Activated T-helper 2 cell treated with anti-CD3 and anti-CD28 coated beads, Interferon-gamma antibody, Interleukin-2, Interleukin-4, amounts not matched to agents 10 μg/mL and 5 μg/mL and 100 μg/mL, durations not matched to agents 14 hours and 24 hours and 36 hours (primary cell): ENCODE measurements at regions of chr1 and their contacts with region 1.

Region 1: DNA sequence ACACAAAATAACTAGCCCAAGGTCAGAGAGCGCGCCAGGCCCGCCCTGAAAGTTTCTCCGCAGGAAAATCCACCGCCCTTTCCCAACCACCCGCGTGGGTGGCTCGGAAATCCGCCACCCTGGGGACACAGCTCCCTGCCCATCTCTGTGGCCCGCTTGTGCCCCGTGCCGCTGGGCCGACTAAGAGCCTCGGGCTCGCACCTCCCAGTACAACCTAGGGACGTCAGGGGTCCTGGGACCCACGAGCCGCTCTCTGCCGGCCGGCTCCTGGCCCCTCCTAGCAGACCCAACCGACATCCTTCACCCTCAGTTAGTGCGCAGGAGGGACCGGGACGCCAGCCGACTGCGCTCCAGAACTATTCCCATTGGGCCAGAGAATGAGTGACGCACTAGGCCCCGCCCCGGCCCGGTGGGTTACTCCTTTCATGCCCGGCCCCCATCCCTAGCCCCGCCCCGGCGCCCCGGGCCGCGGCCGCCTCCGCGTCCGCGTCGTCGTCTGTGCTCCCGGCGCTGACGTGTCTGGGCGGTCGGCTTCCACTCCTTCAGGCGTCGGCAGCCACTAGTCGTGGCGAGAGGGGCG is 395 bp upstream of the UAP1 start:
- DNase-seq: peak; percentile 97
- H3K4me3 Mint-ChIP-seq: peak overlapping the region; percentile 86
- H3K27ac Mint-ChIP-seq: peak overlapping the region; percentile 94
- H3K4me1 Mint-ChIP-seq: peaks cover 38% of the 10 kb centered on the region
- H3K27me3 Mint-ChIP-seq: peaks cover 2% of the 10 kb centered on the region

Region 2: GRCh38 chr1:161766102-161766981 is 794.8 kb before region 1 on chr1 and contains the start of gene ATF6:
- intact Hi-C with region 1: loop called (anchors 1 kb)
- DNase-seq: peak; percentile 77
- H3K4me3 Mint-ChIP-seq: peak within 1 kb of the TSS; percentile 97
- H3K27ac Mint-ChIP-seq: peak within 1 kb of the TSS; percentile 96
- H3K4me1 Mint-ChIP-seq: peaks cover 40% of the 10 kb centered on the region
- H3K27me3 Mint-ChIP-seq: no peaks in the 10 kb centered on the region
- total RNA-seq, gene ATF6: 29.6 and 30.4 TPM in 2 replicates

Region 3: DNA sequence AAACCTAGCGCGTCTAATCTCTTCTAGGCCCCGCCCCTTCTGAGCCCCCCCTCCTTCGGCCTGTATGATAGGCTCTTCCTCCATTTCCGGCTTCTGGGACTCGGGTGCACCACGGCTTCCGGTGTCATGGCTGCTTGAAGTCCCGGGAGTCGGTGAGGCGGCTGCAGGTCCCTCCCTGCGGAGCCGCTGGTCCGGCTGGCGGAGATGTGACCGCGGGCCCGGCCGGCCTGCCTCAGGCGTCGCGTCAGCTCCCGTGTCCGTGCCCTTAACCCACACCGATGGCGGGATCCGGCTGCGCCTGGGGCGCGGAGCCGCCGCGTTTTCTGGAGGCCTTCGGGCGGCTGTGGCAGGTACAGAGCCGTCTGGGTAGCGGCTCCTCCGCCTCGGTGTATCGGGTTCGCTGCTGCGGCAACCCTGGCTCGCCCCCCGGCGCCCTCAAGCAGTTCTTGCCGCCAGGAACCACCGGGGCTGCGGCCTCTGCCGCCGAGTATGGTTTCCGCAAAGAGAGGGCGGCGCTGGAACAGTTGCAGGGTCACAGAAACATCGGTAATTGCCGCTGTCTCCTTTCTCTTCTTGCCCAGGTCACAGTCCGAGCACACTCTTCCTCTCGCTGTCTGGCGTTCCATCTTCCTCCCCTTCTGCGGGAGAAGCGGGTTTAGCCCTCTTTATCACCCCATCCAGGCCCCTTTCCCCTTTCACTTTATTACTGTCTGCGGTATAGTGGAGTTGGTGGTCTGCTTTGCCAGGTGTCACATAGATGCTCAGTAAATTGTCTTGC is 63.2 kb before region 1 on chr1 and contains the start of gene UHMK1:
- intact Hi-C with region 1: loop called (anchors 1 kb)
- DNase-seq: peak; percentile 85
- H3K4me3 Mint-ChIP-seq: peak within 1 kb of the TSS; percentile 93
- H3K27ac Mint-ChIP-seq: peak within 1 kb of the TSS; percentile 90
- H3K4me1 Mint-ChIP-seq: peaks cover 31% of the 10 kb centered on the region
- H3K27me3 Mint-ChIP-seq: peaks cover 3% of the 10 kb centered on the region
- total RNA-seq, gene UHMK1: 56.3 and 56.7 TPM in 2 replicates

Region 4: GRCh38 chr1:162627662-162628296 is 66.7 kb after region 1 on chr1:
- intact Hi-C with region 1: no loop called
- DNase-seq: no peak
- H3K4me3 Mint-ChIP-seq: no peak overlapping the region
- H3K27ac Mint-ChIP-seq: no peak overlapping the region
- H3K4me1 Mint-ChIP-seq: peaks cover 4% of the 10 kb centered on the region
- H3K27me3 Mint-ChIP-seq: peaks cover 15% of the 10 kb centered on the region

Region 5: DNA sequence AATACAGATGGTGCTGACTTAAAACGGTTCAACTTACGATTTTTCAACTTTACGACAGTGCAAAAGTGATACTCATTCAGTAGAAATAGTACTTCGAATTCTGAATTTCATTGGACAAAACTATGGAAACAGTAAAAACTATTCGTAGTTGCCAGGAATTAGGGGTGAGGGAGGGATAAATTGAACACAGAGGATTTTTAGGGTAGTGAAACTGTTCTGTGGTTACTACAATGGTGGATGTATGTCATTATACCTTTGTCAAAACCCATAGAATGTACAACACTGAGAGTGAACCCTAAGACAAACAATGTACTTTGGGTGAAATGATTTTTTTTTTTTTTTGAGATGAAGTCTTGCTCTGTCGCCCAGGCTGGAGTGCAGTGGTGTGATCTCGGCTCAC is 78.6 kb after region 1 on chr1:
- intact Hi-C with region 1: no loop called
- DNase-seq: no peak
- H3K4me3 Mint-ChIP-seq: no peak overlapping the region
- H3K27ac Mint-ChIP-seq: no peak overlapping the region
- H3K4me1 Mint-ChIP-seq: no peaks in the 10 kb centered on the region
- H3K27me3 Mint-ChIP-seq: peaks cover 12% of the 10 kb centered on the region

Region 6: GRCh38 chr1:163321311-163322305 is 760.5 kb after region 1 on chr1 and contains the start of gene NUF2:
- intact Hi-C with region 1: loop called (anchors 5 kb)
- DNase-seq: peak; percentile 96
- H3K4me3 Mint-ChIP-seq: peak within 1 kb of the TSS; percentile 96
- H3K27ac Mint-ChIP-seq: peak within 1 kb of the TSS; percentile 97
- H3K4me1 Mint-ChIP-seq: peaks cover 32% of the 10 kb centered on the region
- H3K27me3 Mint-ChIP-seq: no peaks in the 10 kb centered on the region
- total RNA-seq, gene NUF2: 45.5 and 47.4 TPM in 2 replicates